Mammary epithelial cell (primary cell): ENCODE measurements at regions of chr6 and their contacts with region 1.

Region 1: GRCh38 chr6:147382945-147383554 is 125.4 kb upstream of the SAMD5 start:
- DNase-seq: peak; percentile 19
- H3K4me3 ChIP-seq: no peak overlapping the region
- H3K27ac ChIP-seq: no peak overlapping the region
- H3K4me1 ChIP-seq: no peaks in the 10 kb centered on the region
- H3K27me3 ChIP-seq: no peaks in the 10 kb centered on the region
- CTCF ChIP-seq: peak; percentile 51 to 53

Region 2: DNA sequence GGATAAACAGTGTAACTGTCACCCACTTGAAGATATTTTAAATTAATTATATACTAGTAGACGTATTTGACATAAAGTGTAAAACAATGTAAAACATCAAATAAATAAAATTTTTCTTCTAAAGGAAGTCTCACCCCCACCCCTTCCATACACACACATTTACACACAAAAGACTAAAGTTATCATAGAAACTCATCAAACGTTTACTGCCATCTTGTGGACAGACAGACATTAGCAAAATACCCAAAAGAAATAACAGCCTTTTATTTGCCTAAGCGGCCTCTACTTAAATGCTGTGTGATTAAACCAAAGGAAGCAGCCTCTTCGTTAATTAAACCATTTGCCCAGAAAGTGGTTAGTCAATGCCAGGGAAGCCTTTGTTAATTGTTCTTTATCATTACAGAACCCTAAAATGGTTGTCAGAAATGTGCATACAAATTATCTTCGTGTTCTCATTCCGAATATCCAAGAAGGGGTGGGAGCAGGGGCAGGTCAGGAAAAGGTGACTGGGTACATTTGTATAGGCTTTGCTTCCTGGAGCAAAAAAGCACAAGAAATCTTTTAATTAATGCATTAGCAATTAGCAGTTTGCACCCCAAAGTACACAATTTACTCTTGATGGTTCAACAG is 783.4 kb after region 1 on chr6:
- CTCF ChIA-PET with region 1: no interaction called
- dilution Hi-C with region 1: no loop called
- in situ Hi-C with region 1: loop called in 1 of 2 experiments (anchors 25 kb)
- intact Hi-C with region 1: loop called (anchors 2 kb)
- DNase-seq: peak; percentile 39
- H3K4me3 ChIP-seq: no peak overlapping the region
- H3K27ac ChIP-seq: no peak overlapping the region
- H3K4me1 ChIP-seq: no peaks in the 10 kb centered on the region
- H3K27me3 ChIP-seq: no peaks in the 10 kb centered on the region
- CTCF ChIP-seq: peak; percentile 56 to 66